Left cardiac atrium (tissue), 4 donors: ENCODE measurements at regions of chr12 and their contacts with region 1.

Region 1: DNA sequence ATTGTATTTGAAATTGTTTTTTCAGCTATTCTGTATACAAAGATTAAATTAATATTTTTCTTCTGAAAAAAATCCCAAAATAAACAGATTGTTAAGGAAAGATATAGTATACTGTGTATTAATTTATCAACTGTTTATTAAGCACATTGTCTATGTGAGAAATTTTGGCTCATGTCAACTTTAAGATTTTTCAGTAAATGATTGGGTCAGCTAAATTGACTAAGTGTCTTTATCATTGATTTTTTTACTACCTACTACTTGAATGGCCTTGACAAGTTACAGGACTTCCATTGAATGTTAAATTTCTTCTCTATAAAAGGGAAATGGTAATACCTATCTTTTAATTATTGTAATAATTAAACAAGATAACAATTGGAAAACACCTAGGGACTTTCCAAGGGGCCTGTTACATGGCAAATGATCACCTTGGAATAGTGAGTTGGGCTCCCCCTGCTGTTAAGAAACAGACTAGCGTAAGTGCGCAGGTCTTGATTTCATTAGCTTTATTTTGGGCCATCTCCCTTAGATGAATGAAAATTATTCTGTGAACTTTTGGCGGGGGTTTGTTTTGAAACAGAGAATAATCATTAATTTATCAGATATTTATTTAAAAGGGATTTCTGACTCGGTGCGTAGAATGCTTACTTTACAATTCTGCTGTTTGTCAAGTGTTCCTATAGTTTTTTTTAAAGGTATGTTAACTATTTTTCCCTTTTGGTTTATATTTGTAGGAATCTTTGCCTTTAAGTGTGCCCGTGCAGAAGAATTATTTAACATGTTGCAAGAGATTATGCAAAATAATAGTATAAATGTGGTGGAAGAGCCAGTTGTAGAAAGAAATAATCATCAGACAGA is 14.5 kb upstream of the CCT2 start:
- DNase-seq: peak; percentile 37
- ATAC-seq: peak; percentile 76 to 82

Region 2: GRCh38 chr12:69405466-69405865 is 165.3 kb before region 1 on chr12:
- intact Hi-C with region 1: loop called (anchors 5 to 10 kb)
- DNase-seq: peak; percentile 53
- ATAC-seq: peak; percentile 79 to 99

Region 3: DNA sequence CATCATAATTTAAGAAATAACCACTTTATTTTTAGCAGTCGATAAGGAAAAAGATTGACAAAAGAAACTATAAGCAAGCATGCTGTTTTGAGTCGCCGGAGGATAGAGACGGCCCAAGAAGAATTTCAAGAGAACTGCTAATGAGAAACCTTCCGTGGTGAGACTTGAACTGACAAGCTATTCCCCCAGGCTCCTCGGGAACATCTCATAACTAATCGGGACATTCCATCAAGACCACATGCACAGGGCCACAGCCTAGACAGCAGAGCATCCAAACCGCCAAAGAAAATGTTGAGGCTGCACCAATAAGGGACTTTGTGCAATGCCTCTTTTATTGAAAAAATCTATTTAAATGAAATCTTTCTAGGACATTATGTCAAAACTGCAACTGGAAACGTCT is 160.2 kb before region 1 on chr12:
- intact Hi-C with region 1: loop called (anchors 5 to 10 kb)
- DNase-seq: no peak
- ATAC-seq: no peak

Region 4: DNA sequence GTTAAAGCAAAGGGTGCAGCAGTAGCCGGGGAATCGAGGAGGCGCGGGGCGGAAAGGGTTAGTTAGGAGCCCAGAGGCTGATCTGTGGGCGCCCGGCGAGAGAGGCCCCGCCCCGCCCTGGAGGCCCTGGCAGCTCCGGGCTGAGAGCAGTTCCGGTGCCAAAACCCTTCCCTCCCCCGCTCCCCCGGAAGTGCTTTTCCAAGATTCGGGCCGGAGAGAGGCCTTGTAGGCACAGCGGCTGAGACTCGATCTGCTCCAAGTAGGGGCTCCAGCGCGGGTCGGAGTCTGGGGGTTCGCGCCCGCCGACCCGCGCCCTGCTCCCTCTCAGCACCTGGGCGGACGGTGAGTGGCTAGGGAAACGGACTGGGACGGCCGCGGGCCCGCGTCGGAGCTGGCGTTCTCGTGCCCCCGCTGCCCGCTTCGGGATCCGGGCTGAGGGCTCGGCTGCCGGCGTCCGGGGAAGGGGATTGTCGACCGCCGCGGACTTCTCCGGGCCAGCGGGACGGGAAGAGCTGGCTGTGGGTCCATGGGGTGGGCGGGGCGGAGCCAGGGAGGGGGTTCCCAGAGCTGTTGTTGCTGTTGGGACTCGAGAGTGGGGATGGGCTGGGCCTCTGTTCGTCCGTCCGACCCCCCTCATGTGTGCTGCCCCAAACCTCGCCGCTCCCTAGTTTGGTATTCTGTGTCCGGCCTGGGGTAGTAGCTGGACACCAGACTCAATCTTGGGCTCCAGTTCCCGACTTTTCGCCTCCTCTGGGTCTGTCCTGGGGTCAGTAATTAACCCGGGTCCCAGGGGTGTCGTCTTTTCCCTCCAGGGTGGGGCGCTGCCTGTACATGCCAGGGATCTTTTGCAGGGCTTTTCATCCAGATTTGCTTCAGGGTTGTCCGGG is 100.3 kb before region 1 on chr12 and contains the start of gene FRS2:
- intact Hi-C with region 1: loop called in 1 of 2 experiments (anchors 2 kb)
- DNase-seq: peak; percentile 93
- ATAC-seq: peak; percentile 99
- total RNA-seq, gene FRS2: 21.3 to 30.7 TPM